ENCODE measurements at regions of chr14 and their contacts with region 1.

Region 1: GRCh38 chr14:22570132-22570949 is 18.7 kb downstream of the DAD1 start:
- DNase-seq: peak; percentile 91
- H3K4me3 Mint-ChIP-seq: peak overlapping the region; percentile 79
- H3K27ac Mint-ChIP-seq: peak overlapping the region; percentile 98
- H3K4me1 Mint-ChIP-seq: peaks cover 59% of the 10 kb centered on the region
- H3K27me3 Mint-ChIP-seq: no peaks in the 10 kb centered on the region

Region 2: DNA sequence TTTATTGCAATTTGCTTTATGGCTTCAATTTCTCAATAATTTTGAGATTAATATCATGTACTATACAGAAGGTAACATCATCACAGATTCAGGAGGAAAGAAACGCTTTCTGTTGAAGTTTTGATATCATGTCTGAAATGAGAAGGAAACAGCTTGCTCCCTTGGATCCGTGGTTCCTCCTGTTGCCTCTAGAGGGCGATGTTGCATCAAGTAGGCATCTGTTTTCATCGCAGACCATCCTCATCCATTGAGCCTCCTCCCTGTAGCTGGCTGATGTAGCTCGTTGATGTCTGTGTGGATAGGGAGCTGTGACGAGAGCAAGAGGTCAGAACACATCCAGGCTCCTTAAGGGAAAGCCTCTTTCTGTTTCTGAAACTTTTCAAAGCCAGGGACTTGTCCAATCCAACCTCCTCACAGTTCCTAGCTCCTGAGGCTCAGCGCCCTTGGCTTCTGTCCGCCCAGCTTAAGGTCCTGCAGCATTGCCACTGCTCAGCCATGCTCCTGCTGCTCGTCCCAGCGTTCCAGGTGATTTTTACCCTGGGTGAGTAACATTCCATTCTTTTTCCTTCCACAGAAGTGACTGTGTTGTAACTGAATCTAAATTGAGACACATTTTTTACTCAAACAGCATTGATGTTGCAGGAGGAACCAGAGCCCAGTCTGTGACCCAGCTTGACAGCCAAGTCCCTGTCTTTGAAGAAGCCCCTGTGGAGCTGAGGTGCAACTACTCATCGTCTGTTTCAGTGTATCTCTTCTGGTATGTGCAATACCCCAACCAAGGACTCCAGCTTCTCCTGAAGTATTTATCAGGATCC is 592.0 kb before region 1 on chr14:
- CTCF ChIA-PET with region 1: interaction called, 18 read pairs
- DNase-seq: peak; percentile 72
- H3K4me3 Mint-ChIP-seq: peak overlapping the region; percentile 75
- H3K27ac Mint-ChIP-seq: peak overlapping the region; percentile 88
- H3K4me1 Mint-ChIP-seq: peaks cover 31% of the 10 kb centered on the region
- H3K27me3 Mint-ChIP-seq: peaks cover 12% of the 10 kb centered on the region

Region 3: GRCh38 chr14:22122227-22122818 is 448.0 kb before region 1 on chr14:
- CTCF ChIA-PET with region 1: interaction called, 17 read pairs
- DNase-seq: peak; percentile 42
- H3K4me3 Mint-ChIP-seq: peak overlapping the region; percentile 82
- H3K27ac Mint-ChIP-seq: peak overlapping the region; percentile 92
- H3K4me1 Mint-ChIP-seq: peaks cover 22% of the 10 kb centered on the region
- H3K27me3 Mint-ChIP-seq: no peaks in the 10 kb centered on the region

Region 4: DNA sequence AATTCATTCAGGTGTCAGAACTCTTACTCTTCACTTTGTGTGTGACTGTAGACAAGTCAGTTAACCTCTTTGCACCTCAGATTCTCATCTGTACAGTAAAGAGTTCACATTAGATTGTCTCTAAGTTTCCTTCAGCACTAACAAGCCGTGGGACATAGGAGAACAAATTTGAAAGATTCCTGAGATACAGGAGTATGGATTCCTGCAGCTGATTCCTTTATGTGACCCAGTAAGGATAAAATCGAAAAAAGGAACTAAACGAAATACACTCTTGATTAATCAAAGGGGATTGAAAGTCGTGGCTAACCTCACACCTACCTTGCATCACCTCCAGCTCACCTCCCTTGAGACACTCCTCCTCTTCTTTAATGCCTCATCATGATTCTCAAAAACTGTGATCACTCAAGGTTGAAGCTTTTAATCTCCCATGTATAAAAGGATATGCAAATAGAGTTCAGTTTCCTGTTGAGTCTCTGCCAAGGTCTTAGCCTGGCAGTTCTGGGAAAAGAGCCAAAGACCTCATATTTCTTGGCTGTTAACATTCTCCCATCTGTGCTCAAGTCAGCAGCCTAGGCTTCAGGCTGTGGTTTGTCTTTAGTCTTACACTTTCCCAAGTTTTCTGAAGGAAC is 137.9 kb before region 1 on chr14:
- CTCF ChIA-PET with region 1: no interaction called
- DNase-seq: no peak
- H3K4me3 Mint-ChIP-seq: no peak overlapping the region
- H3K27ac Mint-ChIP-seq: no peak overlapping the region
- H3K4me1 Mint-ChIP-seq: no peaks in the 10 kb centered on the region
- H3K27me3 Mint-ChIP-seq: no peaks in the 10 kb centered on the region

Region 5: DNA sequence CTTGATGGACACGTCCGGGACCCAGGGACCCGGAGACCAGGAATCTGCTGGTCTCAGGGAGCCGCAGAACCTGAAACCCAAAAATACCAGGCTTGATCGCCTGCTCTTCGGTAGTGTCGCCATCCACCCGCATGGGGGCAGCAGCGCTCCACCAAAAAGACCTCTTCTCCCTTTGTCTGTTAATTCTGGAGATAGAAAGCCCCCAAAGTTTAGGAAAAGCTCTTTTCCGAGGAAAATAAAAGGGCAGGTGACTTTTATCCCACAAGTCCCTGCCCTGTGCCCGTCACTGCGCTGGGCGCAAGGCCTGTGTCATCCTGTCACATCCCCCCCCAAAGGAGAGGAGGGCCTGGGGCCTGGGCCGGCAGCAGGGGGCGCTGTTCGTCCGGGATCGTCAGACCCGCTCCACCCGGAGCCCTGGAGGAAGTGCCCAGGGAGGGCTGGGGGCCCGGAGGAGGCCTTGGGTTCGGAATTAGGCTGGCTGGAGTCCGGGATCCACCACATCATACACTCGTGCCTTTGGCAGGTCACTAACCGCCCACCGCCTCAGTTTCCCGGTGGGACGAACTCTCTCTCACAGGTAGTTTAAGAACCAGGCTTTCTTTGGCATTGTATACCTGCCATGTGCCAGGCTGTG is 13.2 kb before region 1 on chr14:
- CTCF ChIA-PET with region 1: interaction called, 139 read pairs
- DNase-seq: peak; percentile 93
- H3K4me3 Mint-ChIP-seq: peak overlapping the region; percentile 80
- H3K27ac Mint-ChIP-seq: peak overlapping the region; percentile 97
- H3K4me1 Mint-ChIP-seq: peaks cover 92% of the 10 kb centered on the region
- H3K27me3 Mint-ChIP-seq: peaks cover 8% of the 10 kb centered on the region

Region 6: DNA sequence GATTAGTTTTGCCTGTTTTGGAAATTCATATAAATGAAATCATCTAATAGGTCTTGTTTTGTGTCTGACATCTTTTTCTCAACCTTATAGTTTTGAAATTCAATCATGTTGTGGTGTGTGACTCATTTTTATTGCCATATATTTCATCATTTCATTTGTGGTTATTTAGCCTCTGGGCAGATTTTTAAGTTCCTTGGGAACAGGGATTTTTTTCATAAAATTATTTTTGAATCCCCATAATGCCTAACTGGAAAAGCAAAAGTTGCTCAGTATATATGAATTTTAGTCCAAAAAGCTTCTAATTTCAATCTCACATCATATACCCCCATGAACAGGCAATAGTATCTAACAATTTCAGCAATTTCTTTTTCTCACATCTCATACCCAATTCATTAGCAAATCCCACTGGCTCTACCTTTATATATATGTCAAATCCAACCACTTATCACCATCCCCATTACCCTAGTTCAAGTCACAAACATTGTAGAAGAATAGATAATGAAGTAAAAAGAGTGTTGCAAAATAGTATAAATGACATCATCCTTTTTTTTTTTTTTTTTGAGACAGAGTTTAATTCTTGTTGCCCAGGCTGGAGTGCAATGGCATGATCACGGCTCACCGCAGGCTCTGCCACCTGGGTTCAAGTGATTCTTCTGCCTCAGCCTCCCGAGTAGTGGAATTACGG is 76.4 kb after region 1 on chr14:
- CTCF ChIA-PET with region 1: interaction called, 62 read pairs
- DNase-seq: no peak
- H3K4me3 Mint-ChIP-seq: no peak overlapping the region
- H3K27ac Mint-ChIP-seq: no peak overlapping the region
- H3K4me1 Mint-ChIP-seq: no peaks in the 10 kb centered on the region
- H3K27me3 Mint-ChIP-seq: no peaks in the 10 kb centered on the region

Region 7: DNA sequence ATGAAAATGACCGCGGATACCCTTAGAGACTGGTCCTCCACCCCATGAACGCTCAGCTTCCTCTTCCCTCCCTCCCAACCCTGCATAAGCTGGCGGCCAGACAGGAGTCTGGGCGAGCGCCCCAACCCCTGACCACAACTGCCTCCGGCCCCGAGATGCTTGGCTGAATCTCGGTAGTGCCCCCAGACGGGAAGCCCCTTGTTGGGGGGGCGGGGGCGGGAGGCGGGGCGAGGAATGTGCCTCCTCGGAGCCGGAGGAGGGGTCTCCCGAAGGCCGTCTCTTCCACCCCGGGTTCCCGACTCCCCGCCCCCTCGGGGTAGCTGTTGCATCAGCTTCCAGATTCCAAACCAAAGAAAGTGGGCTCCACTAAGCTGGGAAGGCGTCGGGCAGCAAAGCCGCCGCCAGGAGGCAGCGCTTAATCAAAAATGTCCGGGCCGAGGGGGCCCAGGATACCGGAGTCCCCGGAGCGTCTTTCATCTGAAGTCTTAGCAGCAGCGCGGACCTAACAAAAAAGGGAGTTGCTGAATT is 252.3 kb after region 1 on chr14:
- CTCF ChIA-PET with region 1: interaction called, 38 read pairs
- DNase-seq: peak; percentile 77
- H3K4me3 Mint-ChIP-seq: peak overlapping the region; percentile 46
- H3K27ac Mint-ChIP-seq: no peak overlapping the region
- H3K4me1 Mint-ChIP-seq: peaks cover 37% of the 10 kb centered on the region
- H3K27me3 Mint-ChIP-seq: peaks cover 58% of the 10 kb centered on the region

Measured in activated naive CD4-positive, alpha-beta T cell treated with anti-CD3 and anti-CD28 coated beads, Interleukin-2, amount 10 ng/mL, durations not matched to agents 7 days and 5 days (primary cell).